MCF 10A (cell line): ENCODE measurements at regions of chr3 and their contacts with region 1.

Region 1: DNA sequence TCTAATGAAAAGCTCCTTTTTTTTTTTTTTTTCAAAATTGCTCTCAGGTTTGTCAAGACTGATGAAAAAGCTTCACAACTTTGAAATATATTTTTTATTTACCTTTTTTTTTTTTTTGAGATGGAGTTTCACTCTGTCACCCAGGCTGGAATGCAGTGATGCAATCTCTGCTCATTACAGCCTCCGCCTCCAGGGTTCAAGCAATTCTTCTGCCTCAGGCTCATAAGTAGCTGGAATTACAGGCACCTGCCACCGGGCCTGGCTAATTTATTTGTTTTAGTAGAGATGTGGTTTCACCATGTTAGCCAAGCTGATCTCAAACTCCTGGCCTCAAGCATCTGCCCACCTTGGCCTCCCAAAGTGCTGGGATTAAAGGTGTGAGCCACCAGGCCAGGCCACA is 1515.0 kb downstream of the OTOL1 start:
- DNase-seq: no peak
- H3K4me3 Mint-ChIP-seq: no peak overlapping the region
- H3K27ac Mint-ChIP-seq: no peak overlapping the region
- H3K4me1 Mint-ChIP-seq: no peaks in the 10 kb centered on the region
- H3K27me3 Mint-ChIP-seq: no peaks in the 10 kb centered on the region
- CTCF ChIP-seq: no peak

Region 2: GRCh38 chr3:162697911-162698310 is 313.7 kb before region 1 on chr3:
- CTCF ChIA-PET with region 1: no interaction called
- POLR2A ChIA-PET with region 1: no interaction called
- intact Hi-C with region 1: no loop called
- DNase-seq: no peak
- H3K4me3 Mint-ChIP-seq: no peak overlapping the region
- H3K27ac Mint-ChIP-seq: no peak overlapping the region
- H3K4me1 Mint-ChIP-seq: no peaks in the 10 kb centered on the region
- H3K27me3 Mint-ChIP-seq: no peaks in the 10 kb centered on the region
- CTCF ChIP-seq: no peak

Region 3: GRCh38 chr3:162945642-162946041 is 65.9 kb before region 1 on chr3:
- CTCF ChIA-PET with region 1: no interaction called
- POLR2A ChIA-PET with region 1: no interaction called
- intact Hi-C with region 1: no loop called
- DNase-seq: no peak
- H3K4me3 Mint-ChIP-seq: no peak overlapping the region
- H3K27ac Mint-ChIP-seq: no peak overlapping the region
- H3K4me1 Mint-ChIP-seq: peaks cover 6% of the 10 kb centered on the region
- H3K27me3 Mint-ChIP-seq: no peaks in the 10 kb centered on the region
- CTCF ChIP-seq: no peak

Region 4: DNA sequence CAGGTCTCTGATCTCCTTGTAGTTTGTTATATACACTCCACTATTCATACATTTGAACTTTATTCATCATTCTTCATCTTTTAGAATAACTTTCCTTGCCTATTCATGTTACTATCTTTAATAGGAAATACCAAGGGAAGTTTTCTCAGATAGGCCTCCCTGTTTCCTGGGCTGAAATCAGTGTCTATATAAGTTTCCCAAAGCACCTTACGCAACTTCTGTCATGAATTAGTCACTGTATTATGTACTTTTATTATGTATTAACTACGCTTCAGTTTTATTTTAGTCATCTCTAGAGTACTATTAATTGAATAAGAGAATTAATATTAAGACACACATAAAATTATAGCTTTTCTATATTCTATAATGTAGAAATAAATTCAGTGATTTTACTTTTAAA is 33.5 kb before region 1 on chr3:
- CTCF ChIA-PET with region 1: no interaction called
- POLR2A ChIA-PET with region 1: no interaction called
- intact Hi-C with region 1: loop called (anchors 1 kb)
- DNase-seq: peak; percentile 63
- H3K4me3 Mint-ChIP-seq: no peak overlapping the region
- H3K27ac Mint-ChIP-seq: no peak overlapping the region
- H3K4me1 Mint-ChIP-seq: peaks cover 9% of the 10 kb centered on the region
- H3K27me3 Mint-ChIP-seq: no peaks in the 10 kb centered on the region
- CTCF ChIP-seq: no peak

Region 5: GRCh38 chr3:163024680-163025079 is 13.1 kb after region 1 on chr3:
- CTCF ChIA-PET with region 1: no interaction called
- POLR2A ChIA-PET with region 1: no interaction called
- intact Hi-C with region 1: no loop called
- DNase-seq: no peak
- H3K4me3 Mint-ChIP-seq: no peak overlapping the region
- H3K27ac Mint-ChIP-seq: no peak overlapping the region
- H3K4me1 Mint-ChIP-seq: no peaks in the 10 kb centered on the region
- H3K27me3 Mint-ChIP-seq: no peaks in the 10 kb centered on the region
- CTCF ChIP-seq: no peak